ENCODE measurements at regions of chr6 and their contacts with region 1.

Region 1: DNA sequence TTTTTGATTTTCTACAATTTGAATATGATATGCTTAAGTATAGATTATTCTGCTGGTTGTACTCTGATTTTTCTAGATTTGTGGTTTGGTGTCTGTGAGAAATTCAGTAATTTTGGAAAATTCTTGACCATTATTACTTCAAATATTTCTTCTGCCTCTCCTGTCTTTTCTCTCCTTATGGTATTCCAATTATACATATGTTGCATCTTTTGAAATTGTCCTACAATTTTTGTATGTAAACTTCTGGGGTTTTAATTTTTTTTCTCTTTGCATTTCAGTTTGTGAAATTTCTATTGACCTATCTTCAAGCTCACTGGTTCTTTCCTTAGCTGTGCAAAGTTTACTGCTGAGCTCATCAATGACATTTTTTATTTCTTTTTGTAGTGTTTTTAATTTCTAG is 534.4 kb upstream of the SLC35B3 start:
- DNase-seq: no peak
- H3K4me3 ChIP-seq: no peak overlapping the region
- H3K27ac ChIP-seq: no peak overlapping the region
- H3K4me1 ChIP-seq: no peaks in the 10 kb centered on the region
- H3K27me3 ChIP-seq: no peaks in the 10 kb centered on the region
- CTCF ChIP-seq: no peak
- POLR2A ChIP-seq: no peak

Region 2: DNA sequence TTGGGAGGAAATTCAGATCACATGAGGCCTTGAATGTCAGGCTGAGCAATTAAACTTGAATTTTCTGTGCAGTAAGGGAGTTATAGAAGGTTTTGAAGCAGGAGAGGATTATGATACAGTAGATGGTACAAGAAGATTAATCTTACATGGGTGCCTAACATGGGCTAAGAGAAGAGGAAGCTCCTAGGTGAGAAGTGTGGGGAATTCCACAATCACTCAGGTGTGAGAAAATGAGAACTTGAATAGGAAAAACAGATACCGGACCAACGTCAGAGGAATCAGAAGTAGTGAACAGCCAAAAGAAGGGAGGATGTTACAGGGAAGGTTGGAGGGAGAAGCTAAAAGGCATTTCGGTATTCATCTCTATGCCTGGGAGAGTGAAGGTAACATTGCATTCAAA is 283.7 kb before region 1 on chr6:
- intact Hi-C with region 1: no loop called
- DNase-seq: no peak
- H3K4me3 ChIP-seq: no peak overlapping the region
- H3K27ac ChIP-seq: no peak overlapping the region
- H3K4me1 ChIP-seq: no peaks in the 10 kb centered on the region
- H3K27me3 ChIP-seq: no peaks in the 10 kb centered on the region
- CTCF ChIP-seq: no peak
- POLR2A ChIP-seq: no peak

Region 3: DNA sequence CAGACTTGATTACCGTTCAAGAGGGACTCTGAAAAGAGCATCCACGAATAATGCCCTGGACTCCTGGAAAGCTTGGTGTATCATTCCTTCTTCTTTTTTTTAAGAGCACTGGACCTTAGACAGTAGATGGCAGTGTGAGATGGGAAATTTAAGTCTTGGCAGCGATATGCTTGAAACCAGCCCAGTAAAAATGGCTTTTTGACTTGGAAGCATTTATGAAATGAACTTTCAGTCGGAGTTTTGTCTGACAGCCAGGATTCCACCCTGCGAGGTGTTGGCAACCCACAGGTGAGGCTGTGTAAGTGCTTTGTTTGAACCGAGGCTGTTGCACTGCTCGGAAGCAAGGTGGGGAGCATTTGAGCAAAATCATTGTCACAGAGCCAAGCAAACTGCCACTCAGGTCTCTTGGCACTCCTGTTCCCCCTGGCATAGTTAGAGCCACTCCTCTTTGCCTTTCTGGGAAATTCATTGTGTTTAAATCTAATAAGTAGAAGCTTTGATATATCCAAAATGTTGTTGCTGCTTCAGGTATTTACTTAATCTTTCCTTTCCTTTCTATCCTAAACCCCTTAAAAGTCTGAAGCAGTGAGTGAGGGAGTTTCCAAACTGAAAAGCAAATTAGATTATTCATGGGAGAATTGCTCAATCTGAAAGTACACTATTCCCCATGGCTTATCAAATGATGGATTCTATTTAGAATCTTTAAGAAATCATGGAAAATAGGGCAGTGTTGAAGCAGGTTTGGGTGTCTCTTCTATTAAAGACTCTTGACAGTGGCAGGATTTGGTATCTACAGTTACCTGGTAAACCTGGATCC is 261.6 kb before region 1 on chr6:
- intact Hi-C with region 1: loop called (anchors 10 kb)
- DNase-seq: no peak
- H3K4me3 ChIP-seq: peak overlapping the region in 1 of 8 donors; percentile 38
- H3K27ac ChIP-seq: no peak overlapping the region
- H3K4me1 ChIP-seq: no peaks in the 10 kb centered on the region
- H3K27me3 ChIP-seq: no peaks in the 10 kb centered on the region
- CTCF ChIP-seq: peak in 4 of 11 experiments; percentile 12 to 20 (median 16)
- POLR2A ChIP-seq: no peak

Measured in spleen (tissue), 13 donors.